Calu3 (cell line): ENCODE measurements at regions of chr6 and their contacts with region 1.

Region 1: GRCh38 chr6:95431637-95432228 is 145.6 kb upstream of the MANEA start:
- DNase-seq: peak; percentile 57
- H3K4me3 Mint-ChIP-seq: no peak overlapping the region
- H3K27ac Mint-ChIP-seq: no peak overlapping the region
- H3K4me1 Mint-ChIP-seq: peaks cover 8% of the 10 kb centered on the region
- H3K27me3 Mint-ChIP-seq: no peaks in the 10 kb centered on the region
- CTCF ChIP-seq: peak; percentile 45

Region 2: DNA sequence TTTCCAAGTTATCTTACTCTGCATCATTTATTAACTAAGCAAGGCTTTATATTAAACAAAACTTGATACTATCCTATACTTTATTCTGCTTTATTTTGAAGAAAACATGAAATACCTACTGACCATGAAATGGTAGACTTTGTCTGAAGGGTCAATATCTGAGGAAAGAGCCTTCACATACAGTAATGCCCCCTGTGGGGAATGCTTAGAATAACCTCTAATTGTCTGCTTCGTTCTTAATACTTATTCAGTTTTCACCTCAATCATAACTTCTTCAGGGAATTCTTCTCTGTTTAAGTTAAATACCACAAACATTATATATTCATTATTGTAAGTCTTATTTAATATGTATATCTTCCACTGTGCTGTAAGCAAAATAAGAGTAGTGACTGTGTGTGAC is 353.3 kb before region 1 on chr6:
- CTCF ChIA-PET with region 1: no interaction called
- intact Hi-C with region 1: no loop called
- DNase-seq: no peak
- H3K4me3 Mint-ChIP-seq: no peak overlapping the region
- H3K27ac Mint-ChIP-seq: no peak overlapping the region
- H3K4me1 Mint-ChIP-seq: no peaks in the 10 kb centered on the region
- H3K27me3 Mint-ChIP-seq: no peaks in the 10 kb centered on the region
- CTCF ChIP-seq: no peak

Region 3: GRCh38 chr6:95091823-95092436 is 339.8 kb before region 1 on chr6:
- CTCF ChIA-PET with region 1: no interaction called
- intact Hi-C with region 1: no loop called
- DNase-seq: no peak
- H3K4me3 Mint-ChIP-seq: no peak overlapping the region
- H3K27ac Mint-ChIP-seq: no peak overlapping the region
- H3K4me1 Mint-ChIP-seq: peaks cover 17% of the 10 kb centered on the region
- H3K27me3 Mint-ChIP-seq: no peaks in the 10 kb centered on the region
- CTCF ChIP-seq: no peak

Region 4: DNA sequence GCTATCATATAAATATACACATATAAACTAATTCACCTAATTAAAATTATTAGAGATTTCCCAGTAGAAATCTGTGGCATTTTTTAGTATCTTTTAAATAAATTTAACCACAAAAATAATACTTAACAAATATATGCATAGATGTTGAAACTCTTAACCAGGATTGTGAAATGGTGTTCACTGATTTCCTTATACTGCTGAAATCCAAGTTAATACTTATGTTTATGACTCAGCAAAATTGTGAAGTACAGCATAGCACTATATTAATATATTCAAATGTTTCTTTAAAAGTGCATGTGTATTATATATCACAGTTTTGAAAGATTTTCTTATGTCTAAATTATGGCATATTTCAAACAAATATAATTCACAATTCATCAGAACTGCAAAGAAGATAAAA is 182.6 kb before region 1 on chr6:
- CTCF ChIA-PET with region 1: no interaction called
- intact Hi-C with region 1: no loop called
- DNase-seq: no peak
- H3K4me3 Mint-ChIP-seq: no peak overlapping the region
- H3K27ac Mint-ChIP-seq: no peak overlapping the region
- H3K4me1 Mint-ChIP-seq: no peaks in the 10 kb centered on the region
- H3K27me3 Mint-ChIP-seq: no peaks in the 10 kb centered on the region
- CTCF ChIP-seq: no peak

Region 5: DNA sequence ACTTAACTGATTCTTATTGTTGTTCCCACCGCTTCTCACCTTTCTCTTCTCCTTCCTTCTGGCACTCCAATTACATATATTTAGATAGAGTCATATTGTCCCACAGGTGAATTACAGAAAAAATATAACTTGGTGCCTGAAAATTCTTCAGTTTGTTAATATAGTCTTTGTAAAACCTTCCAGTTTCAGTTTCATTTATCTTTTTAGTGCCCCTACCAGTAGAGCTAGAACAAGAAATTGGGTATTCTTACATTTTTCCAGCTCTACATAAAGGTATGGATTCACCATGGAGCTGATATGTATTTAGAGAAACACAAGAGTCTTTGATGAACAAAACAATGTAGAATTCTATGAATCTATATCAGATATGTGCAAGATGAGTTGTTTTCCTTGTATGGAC is 156.3 kb after region 1 on chr6:
- CTCF ChIA-PET with region 1: no interaction called
- intact Hi-C with region 1: no loop called
- DNase-seq: no peak
- H3K4me3 Mint-ChIP-seq: no peak overlapping the region
- H3K27ac Mint-ChIP-seq: no peak overlapping the region
- H3K4me1 Mint-ChIP-seq: peaks cover 3% of the 10 kb centered on the region
- H3K27me3 Mint-ChIP-seq: no peaks in the 10 kb centered on the region
- CTCF ChIP-seq: no peak

Region 6: GRCh38 chr6:95690328-95690727 is 258.6 kb after region 1 on chr6:
- CTCF ChIA-PET with region 1: no interaction called
- intact Hi-C with region 1: loop called (anchors 5 kb)
- DNase-seq: no peak
- H3K4me3 Mint-ChIP-seq: peak overlapping the region; percentile 36
- H3K27ac Mint-ChIP-seq: no peak overlapping the region
- H3K4me1 Mint-ChIP-seq: peaks cover 11% of the 10 kb centered on the region
- H3K27me3 Mint-ChIP-seq: no peaks in the 10 kb centered on the region
- CTCF ChIP-seq: no peak

Region 7: GRCh38 chr6:95923518-95923917 is 491.8 kb after region 1 on chr6:
- CTCF ChIA-PET with region 1: no interaction called
- intact Hi-C with region 1: loop called (anchors 5 kb)
- DNase-seq: no peak
- H3K4me3 Mint-ChIP-seq: no peak overlapping the region
- H3K27ac Mint-ChIP-seq: no peak overlapping the region
- H3K4me1 Mint-ChIP-seq: peaks cover 2% of the 10 kb centered on the region
- H3K27me3 Mint-ChIP-seq: no peaks in the 10 kb centered on the region
- CTCF ChIP-seq: no peak

Region 8: DNA sequence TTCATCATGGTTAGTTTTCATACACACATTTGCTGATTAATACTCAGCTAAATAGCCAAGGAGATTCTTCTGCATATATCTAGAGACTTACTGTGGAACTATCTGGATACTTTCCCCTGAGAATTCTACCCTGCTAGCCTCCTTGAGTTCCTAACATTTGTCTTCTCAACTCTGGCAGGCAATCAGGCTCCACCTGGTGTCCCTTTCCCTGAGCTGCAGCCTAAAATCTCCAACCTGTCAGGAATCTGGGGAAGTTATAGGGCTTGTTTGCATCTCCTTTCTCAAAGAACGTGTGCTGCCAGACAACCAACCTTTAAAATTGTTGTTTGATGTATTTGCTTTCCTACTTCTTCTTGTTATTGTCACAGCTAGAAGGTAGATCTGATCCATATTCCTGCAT is 657.4 kb after region 1 on chr6:
- CTCF ChIA-PET with region 1: no interaction called
- intact Hi-C with region 1: loop called (anchors 1 kb)
- DNase-seq: peak; percentile 39
- H3K4me3 Mint-ChIP-seq: no peak overlapping the region
- H3K27ac Mint-ChIP-seq: no peak overlapping the region
- H3K4me1 Mint-ChIP-seq: peaks cover under 1% of the 10 kb centered on the region
- H3K27me3 Mint-ChIP-seq: no peaks in the 10 kb centered on the region
- CTCF ChIP-seq: peak; percentile 59